ENCODE measurements at regions of chr12 and their contacts with region 1.

Region 1: DNA sequence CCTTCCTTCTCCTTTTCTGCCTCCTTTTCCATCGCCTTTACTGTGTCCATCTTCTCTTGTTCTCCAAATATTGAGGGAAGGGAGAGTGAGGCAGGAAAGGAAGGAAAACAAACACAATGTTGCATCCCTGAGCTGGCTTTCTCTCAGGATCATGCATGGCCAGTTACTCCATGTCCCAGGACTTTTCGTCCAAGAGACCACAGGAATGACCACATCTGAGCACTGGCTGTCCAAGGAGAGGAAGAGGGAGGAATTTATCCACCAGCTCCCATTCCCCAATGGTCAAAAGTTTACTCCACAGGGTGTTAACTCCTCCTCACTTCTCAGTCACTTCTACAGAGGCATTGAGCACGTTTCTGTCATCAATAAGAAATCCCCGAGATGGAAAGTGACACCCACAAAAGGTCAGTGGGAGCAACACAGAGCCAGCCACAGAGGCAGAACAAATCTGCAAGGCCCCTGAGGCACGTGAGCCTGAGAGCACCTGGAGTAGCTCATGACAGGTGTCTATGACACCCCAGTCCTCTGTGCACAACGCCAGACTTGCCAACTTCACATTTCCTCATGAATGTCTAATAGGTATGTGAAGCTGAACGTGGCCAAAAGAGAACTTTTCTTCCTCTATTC is 177.3 kb upstream of the NUDT4 start:
- DNase-seq: no peak
- H3K4me3 ChIP-seq: no peak overlapping the region
- H3K27ac ChIP-seq: no peak overlapping the region
- H3K4me1 ChIP-seq: peaks cover 22% of the 10 kb centered on the region
- H3K27me3 ChIP-seq: no peaks in the 10 kb centered on the region
- CTCF ChIP-seq: no peak
- POLR2A ChIP-seq: no peak

Region 2: DNA sequence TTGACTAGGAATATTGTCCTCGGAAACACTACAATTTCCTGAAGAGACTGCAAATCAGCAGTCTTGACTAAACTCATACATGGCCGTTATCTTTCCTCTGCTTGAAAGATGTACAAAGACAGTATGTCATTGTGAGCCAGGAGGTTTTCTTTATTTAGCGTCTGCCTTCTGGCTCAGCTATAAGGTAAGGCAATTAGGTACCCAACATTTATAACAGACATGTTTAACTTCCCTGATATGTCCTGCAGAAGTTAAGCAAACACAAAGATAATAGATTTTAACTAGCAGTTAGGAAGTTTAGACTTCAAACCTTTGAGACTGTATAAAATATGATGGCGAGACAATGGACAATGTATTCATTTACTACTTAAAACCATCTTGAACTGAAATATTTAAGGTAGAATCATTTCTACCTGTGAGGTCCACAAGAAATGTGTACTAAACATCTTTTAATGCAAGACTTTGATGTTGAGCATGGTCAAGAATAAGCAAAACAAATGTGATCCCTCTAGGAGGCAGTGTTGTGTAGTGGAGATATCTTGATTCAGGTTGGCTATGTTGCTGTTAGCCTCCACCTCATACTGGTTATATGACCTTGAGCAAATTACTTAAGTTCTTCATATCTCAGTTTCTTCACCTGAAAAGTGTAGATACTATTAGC is 175.1 kb before region 1 on chr12:
- CTCF ChIA-PET with region 1: no interaction called
- POLR2A ChIA-PET with region 1: no interaction called
- dilution Hi-C with region 1: no loop called
- intact Hi-C with region 1: loop called (anchors 5 kb)
- DNase-seq: peak; percentile 79
- H3K4me3 ChIP-seq: no peak overlapping the region
- H3K27ac ChIP-seq: no peak overlapping the region
- H3K4me1 ChIP-seq: peaks cover 10% of the 10 kb centered on the region
- H3K27me3 ChIP-seq: no peaks in the 10 kb centered on the region
- CTCF ChIP-seq: peak; percentile 37 to 40
- POLR2A ChIP-seq: no peak

Region 3: DNA sequence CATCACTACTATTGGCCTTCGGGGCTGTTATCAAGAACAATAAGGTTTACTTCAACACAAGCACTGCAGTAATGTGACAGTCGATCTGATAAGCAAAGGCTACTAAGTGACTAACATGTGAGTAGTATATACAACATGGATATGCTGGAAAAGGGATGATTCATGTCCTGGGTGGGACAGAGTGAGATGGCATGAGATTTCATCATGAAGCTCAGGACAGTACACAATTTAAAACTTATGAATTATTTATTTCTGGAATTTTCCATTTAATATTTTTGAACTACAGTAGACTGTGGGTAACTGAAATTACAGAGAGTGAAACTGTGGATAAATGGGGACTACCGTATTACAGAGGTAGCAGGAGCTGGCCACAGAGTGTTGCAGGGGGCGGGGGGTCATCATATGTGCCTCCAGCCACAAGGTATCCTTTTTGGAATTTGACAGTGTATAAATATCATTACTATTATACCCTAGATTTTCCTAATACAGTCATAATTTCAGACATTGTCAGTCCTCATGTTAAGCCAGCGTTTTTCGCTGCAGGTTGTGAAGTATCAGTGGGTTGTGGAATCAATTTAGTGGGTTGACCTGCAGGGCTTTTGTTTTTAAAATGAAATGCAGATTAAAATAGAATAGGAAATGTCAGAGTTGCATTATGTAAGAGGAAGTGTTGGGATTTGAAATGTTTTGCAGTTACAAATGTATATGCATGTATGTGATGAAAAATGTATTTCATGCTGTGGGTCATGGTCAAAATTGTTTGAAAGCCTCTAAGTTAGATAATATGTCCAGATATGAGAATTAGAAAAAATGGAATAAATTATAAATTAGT is 29.3 kb after region 1 on chr12:
- CTCF ChIA-PET with region 1: no interaction called
- POLR2A ChIA-PET with region 1: no interaction called
- dilution Hi-C with region 1: no loop called
- intact Hi-C with region 1: loop called (anchors 1 kb)
- DNase-seq: peak; percentile 72
- H3K4me3 ChIP-seq: no peak overlapping the region
- H3K27ac ChIP-seq: peak overlapping the region; percentile 57
- H3K4me1 ChIP-seq: peaks cover 21% of the 10 kb centered on the region
- H3K27me3 ChIP-seq: no peaks in the 10 kb centered on the region
- CTCF ChIP-seq: no peak
- POLR2A ChIP-seq: no peak

Measured in endothelial cell of umbilical vein (primary cell).